A673 (cell line): ENCODE measurements at regions of chr1 and their contacts with region 1.

Region 1: DNA sequence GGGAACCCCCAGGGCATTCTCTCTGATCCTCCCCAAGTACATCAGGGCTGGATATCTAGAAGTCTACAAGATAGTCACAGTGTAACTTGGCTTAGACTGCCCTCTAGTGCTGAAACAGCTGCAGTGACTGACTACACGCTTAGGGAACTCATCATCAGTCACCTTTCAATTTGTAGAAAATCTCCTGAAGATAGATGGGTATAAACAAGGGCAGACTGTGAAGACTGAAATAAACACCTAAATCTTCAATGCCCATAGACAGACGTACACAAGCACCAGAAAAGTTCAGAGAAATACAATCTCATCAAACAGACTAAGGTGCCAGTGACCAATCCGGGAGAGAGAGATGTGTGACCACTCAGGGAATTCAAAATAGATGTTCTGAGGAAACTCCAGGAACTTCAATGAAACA is 46.6 kb downstream of the PACC1 start:
- DNase-seq: peak; percentile 83
- H3K4me3 ChIP-seq: no peak overlapping the region
- H3K27ac ChIP-seq: no peak overlapping the region
- H3K4me1 ChIP-seq: no peaks in the 10 kb centered on the region
- H3K27me3 ChIP-seq: no peaks in the 10 kb centered on the region
- CTCF ChIP-seq: peak; percentile 93

Region 2: GRCh38 chr1:211680752-211681327 is 687.2 kb before region 1 on chr1:
- CTCF ChIA-PET with region 1: interaction called, 7 read pairs
- POLR2A ChIA-PET with region 1: interaction called, 3 read pairs
- intact Hi-C with region 1: loop called (anchors 5 kb)
- DNase-seq: peak; percentile 92
- H3K4me3 ChIP-seq: no peak overlapping the region
- H3K27ac ChIP-seq: no peak overlapping the region
- H3K4me1 ChIP-seq: peaks cover 5% of the 10 kb centered on the region
- H3K27me3 ChIP-seq: no peaks in the 10 kb centered on the region
- CTCF ChIP-seq: peak; percentile 77

Region 3: DNA sequence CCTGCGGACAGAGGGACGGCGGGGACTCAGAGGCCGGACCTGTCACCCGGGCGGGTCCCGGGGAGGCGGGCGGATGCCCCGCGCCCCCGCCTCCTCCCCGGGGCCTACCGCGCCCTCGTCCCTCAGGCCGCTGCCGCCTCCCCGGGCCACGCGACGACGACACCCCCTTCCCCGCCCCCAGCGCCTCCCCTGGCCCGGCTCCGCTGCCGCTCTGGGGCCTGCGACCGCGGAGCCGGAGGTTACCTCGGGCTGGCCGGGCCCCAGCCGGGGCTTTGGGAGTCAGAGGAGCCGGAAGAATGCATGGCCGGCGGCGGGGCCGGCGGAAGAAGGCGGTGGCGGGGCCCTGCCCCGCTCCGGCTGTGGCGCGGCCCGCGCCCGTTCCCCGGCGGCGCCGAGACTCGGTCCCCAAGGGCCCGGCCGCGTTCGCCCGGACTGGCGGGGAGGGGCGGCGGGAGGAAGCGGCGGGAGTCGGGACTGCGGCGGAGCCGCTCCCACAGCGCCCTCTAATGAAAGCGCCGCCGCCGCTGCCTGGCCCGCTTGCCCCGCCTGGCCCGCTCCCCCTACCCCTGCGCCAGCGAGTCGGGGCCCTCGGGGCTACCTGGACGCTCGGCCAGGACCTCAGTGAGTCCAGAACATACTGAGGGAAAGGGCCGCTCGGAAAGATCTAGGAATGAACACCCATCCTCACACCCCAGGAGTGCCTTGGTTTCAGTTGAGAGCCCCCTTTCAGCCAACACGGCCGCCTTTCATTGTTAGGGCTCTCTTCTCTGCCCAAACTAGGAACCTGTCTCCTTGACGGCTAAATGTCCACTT is 537.5 kb before region 1 on chr1 and contains the start of gene LPGAT1:
- CTCF ChIA-PET with region 1: no interaction called
- POLR2A ChIA-PET with region 1: no interaction called
- intact Hi-C with region 1: no loop called
- DNase-seq: peak; percentile 85
- H3K4me3 ChIP-seq: peak within 1 kb of the TSS; percentile 93
- H3K27ac ChIP-seq: peak within 1 kb of the TSS; percentile 93
- H3K4me1 ChIP-seq: peaks cover 4% of the 10 kb centered on the region
- H3K27me3 ChIP-seq: no peaks in the 10 kb centered on the region
- CTCF ChIP-seq: peak; percentile 69
- total RNA-seq, gene LPGAT1: 34.4 and 37.5 TPM in 2 replicates

Region 4: GRCh38 chr1:212062832-212063438 is 305.1 kb before region 1 on chr1:
- CTCF ChIA-PET with region 1: no interaction called
- POLR2A ChIA-PET with region 1: no interaction called
- intact Hi-C with region 1: loop called (anchors 2 kb)
- DNase-seq: peak; percentile 70
- H3K4me3 ChIP-seq: no peak overlapping the region
- H3K27ac ChIP-seq: no peak overlapping the region
- H3K4me1 ChIP-seq: no peaks in the 10 kb centered on the region
- H3K27me3 ChIP-seq: no peaks in the 10 kb centered on the region
- CTCF ChIP-seq: peak; percentile 73

Region 5: GRCh38 chr1:212212906-212213305 is 155.2 kb before region 1 on chr1:
- CTCF ChIA-PET with region 1: interaction called, 15 read pairs
- POLR2A ChIA-PET with region 1: no interaction called
- intact Hi-C with region 1: no loop called
- DNase-seq: no peak
- H3K4me3 ChIP-seq: no peak overlapping the region
- H3K27ac ChIP-seq: no peak overlapping the region
- H3K4me1 ChIP-seq: no peaks in the 10 kb centered on the region
- H3K27me3 ChIP-seq: no peaks in the 10 kb centered on the region
- CTCF ChIP-seq: no peak

Region 6: GRCh38 chr1:212328248-212328647 is 39.8 kb before region 1 on chr1:
- CTCF ChIA-PET with region 1: no interaction called
- POLR2A ChIA-PET with region 1: no interaction called
- intact Hi-C with region 1: no loop called
- DNase-seq: no peak
- H3K4me3 ChIP-seq: no peak overlapping the region
- H3K27ac ChIP-seq: no peak overlapping the region
- H3K4me1 ChIP-seq: no peaks in the 10 kb centered on the region
- H3K27me3 ChIP-seq: no peaks in the 10 kb centered on the region
- CTCF ChIP-seq: no peak

Region 7: GRCh38 chr1:212721388-212722247 is 353.5 kb after region 1 on chr1:
- CTCF ChIA-PET with region 1: no interaction called
- POLR2A ChIA-PET with region 1: no interaction called
- intact Hi-C with region 1: no loop called
- DNase-seq: peak; percentile 32
- H3K4me3 ChIP-seq: no peak overlapping the region
- H3K27ac ChIP-seq: peak overlapping the region; percentile 25
- H3K4me1 ChIP-seq: peaks cover 7% of the 10 kb centered on the region
- H3K27me3 ChIP-seq: no peaks in the 10 kb centered on the region
- CTCF ChIP-seq: no peak